Psoas muscle (tissue), 8 donors: ENCODE measurements at regions of chr20 and their contacts with region 1.

Region 1: DNA sequence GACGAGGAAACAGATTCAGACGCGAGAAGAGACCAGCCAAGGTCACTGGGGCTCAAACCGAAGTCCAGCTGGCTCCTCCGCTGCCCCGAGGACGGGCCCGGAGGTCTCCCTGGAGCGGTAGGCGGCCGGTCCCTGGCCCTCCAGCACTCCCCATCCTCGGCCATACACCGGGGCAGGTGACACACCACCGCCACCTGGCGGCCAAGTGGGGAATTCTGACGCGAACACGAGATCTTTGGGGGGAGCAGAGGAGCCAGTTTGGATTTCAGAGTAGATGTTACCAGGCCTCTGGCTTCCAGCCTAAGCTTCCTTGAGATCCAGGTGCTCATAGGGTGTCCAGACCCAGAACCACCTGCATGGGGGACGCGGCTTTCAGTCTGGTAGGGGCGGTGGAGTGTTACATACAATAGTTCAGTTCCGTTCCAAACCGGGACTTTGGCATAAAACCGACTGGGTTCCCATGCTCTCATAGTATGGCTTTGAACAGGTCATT is 16.1 kb downstream of the BPIFB1 start:
- DNase-seq: peak; percentile 61 to 76
- ATAC-seq: peak; percentile 72 to 82 (median 75)
- H3K4me3 ChIP-seq: no peak overlapping the region
- H3K27ac ChIP-seq: no peak overlapping the region
- H3K4me1 ChIP-seq: no peaks in the 10 kb centered on the region
- H3K27me3 ChIP-seq: peaks cover 0 to 9% (median 6%) of the 10 kb centered on the region in 3 donors
- CTCF ChIP-seq: peak; percentile 87

Region 2: DNA sequence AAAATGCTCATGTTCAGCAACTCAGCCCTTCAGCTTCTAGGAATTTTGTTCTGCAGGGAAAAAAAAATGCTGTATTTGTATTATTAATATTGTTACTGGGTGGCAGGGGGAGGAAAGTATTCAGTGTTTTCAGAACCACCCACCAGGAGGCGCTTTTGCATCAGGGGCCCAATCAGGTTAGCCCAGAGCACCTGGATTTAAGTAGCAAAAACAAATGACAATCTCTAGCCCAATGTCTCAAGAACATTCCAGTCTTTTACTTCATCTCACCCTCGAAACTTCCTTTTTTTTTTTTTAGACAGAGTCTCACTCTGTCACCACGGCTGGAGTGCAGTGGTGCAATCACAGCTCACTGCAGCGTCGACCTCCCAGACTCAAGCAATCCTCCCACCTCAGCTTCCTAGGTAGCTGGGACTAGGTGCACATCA is 624.8 kb before region 1 on chr20:
- intact Hi-C with region 1: loop called in 1 of 2 experiments (anchors 10 kb)
- DNase-seq: no peak
- ATAC-seq: peak in 1 of 4 donors; percentile 70
- H3K4me3 ChIP-seq: no peak overlapping the region
- H3K27ac ChIP-seq: no peak overlapping the region
- H3K4me1 ChIP-seq: no peaks in the 10 kb centered on the region
- H3K27me3 ChIP-seq: no peaks in the 10 kb centered on the region
- CTCF ChIP-seq: peak; percentile 61

Region 3: DNA sequence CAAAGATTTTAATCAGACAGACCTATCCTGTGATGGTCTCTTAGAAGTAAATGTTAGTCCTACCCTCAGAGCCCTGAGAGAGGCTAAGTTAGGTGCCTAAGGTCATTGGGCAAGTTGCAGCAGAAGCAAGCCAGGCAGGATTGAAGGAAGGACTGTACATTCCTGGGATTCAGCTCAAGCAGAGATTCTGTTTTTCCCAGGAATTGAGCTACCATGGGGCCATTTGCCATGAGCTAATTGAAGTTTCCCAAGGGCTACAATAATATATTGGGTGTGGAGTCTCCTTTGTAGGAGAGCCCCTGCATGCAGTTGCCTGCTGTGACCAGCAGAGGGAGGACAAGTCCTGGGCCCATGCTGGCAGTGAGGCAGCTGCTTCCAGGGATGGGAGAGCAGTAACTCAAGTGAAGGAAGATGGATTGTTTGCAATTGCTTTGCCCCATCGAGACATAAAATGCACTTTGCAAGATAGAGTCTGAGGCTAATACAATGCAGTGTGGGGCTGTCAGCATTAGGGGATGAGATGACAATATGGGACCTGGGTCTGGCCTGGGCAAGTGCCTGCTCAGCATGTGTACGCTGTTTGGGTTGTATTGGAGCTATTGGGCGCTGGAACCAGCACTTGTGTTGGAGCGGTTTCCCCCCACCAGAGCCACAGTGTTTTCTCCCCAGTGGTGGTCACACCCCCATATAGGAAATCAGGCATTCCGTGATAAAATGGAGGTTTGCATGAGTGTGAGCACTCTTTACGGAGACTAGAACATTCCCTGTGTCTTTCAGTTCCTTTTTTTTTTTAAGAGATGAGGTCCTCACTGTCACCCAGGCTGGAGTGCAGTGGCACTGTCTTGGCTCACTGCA is 509.0 kb before region 1 on chr20:
- intact Hi-C with region 1: loop called (anchors 5 to 10 kb)
- DNase-seq: peak; percentile 63 to 84
- ATAC-seq: peak; percentile 85 to 93 (median 86)
- H3K4me3 ChIP-seq: no peak overlapping the region
- H3K27ac ChIP-seq: no peak overlapping the region
- H3K4me1 ChIP-seq: peaks cover 12% of the 10 kb centered on the region
- H3K27me3 ChIP-seq: no peaks in the 10 kb centered on the region
- CTCF ChIP-seq: peak; percentile 99

Region 4: DNA sequence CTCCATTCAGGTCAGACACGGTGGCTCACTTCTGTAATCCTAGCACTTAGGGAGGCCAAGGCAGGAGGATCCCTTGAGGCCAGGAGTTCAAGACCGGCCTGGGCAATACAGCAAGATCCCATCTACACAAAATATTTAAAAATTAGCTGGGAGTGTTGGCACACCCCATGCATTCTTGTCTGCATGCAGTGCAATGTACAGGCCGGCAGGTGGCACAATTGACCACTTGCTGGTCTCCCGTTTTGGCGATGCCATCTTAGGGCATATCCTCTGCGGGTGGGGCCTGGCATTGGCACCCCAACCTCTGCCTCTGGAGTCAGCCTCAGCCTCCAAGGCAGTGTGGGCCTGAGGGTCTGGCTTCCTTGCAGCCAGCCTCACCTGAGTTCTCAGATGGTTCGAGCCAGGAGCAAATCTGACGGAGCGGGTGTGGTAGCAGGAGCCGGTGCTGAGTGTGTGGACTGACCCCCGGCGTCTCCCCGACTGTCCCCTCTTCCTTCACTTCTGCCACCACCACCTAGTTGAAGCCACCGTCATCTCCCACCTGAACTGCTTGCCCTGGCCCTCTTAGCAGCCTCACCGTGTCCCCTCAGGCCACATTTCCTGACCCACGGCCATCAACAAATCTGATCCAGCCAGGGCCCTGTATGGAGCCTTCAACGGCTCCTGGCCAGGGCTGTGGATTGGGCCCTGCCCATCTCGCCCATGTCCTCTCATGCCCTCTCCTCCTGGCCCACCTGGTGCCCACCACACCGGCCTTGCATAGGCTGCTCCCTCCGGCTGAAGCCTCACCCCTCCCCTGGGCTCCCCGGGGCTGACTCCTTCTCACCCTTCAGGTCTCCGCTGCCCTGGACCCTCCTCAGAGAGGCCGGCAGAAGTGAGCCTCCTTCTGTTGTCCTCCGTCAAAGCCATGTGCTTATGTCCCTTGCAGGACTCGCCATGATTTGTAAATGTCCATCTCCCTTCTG is 396.4 kb before region 1 on chr20:
- intact Hi-C with region 1: loop called (anchors 1 to 2 kb)
- DNase-seq: peak; percentile 46 to 68
- ATAC-seq: peak; percentile 64 to 83 (median 72)
- H3K4me3 ChIP-seq: no peak overlapping the region
- H3K27ac ChIP-seq: no peak overlapping the region
- H3K4me1 ChIP-seq: no peaks in the 10 kb centered on the region
- H3K27me3 ChIP-seq: no peaks in the 10 kb centered on the region
- CTCF ChIP-seq: peak; percentile 90

Region 5: GRCh38 chr20:33097001-33097400 is 202.2 kb before region 1 on chr20:
- intact Hi-C with region 1: loop called in 1 of 2 experiments (anchors 10 kb)
- DNase-seq: no peak
- ATAC-seq: no peak
- H3K4me3 ChIP-seq: no peak overlapping the region
- H3K27ac ChIP-seq: no peak overlapping the region
- H3K4me1 ChIP-seq: no peaks in the 10 kb centered on the region
- H3K27me3 ChIP-seq: peaks cover 0 to 3% (median 3%) of the 10 kb centered on the region in 3 donors
- CTCF ChIP-seq: no peak